ENCODE measurements at regions of chr3 and their contacts with region 1.

Region 1: DNA sequence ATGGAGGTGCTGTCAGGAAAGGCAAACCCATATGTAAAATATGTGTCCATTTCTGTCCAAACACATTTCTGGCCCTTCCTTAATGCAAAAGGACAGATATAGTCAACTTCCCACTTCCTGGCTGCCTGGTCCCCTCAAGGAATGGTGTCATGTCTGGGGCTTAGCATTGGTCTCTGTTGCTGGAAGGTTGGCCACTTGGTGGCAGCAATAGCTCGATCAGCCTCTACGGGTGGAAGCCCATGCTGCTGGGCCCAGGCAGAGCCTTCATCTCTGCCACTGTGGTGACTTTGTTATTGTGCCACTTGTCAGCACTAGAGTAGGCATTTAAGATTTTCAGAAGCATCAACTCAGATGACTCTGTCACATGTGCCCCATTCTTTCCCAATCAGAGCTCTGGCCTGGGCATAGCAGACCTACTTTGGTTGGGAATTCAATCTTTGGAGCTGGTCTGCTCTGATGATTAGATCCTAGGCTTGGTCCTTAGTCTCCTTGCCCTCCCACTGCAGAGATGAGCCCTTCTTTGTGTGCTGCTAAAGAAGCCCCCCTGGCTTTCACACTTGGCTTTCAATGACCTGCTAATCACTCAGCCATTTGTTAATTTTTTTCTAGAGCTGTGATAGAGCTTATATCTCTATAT is 51.0 kb upstream of the SPSB4 start:
- DNase-seq: peak; percentile 60
- H3K4me3 ChIP-seq: no peak overlapping the region; a peak in 1 of 4 replicates
- H3K27ac ChIP-seq: no peak overlapping the region
- H3K4me1 ChIP-seq: no peaks in the 10 kb centered on the region
- H3K27me3 ChIP-seq: no peaks in the 10 kb centered on the region
- CTCF ChIP-seq: peak; percentile 55
- EP300 ChIP-seq: no peak
- RAD21 ChIP-seq: peak; percentile 90

Region 2: GRCh38 chr3:140842984-140843649 is 157.0 kb before region 1 on chr3:
- CTCF ChIA-PET with region 1: no interaction called
- POLR2A ChIA-PET with region 1: no interaction called
- DNase-seq: no peak
- H3K4me3 ChIP-seq: no peak overlapping the region
- H3K27ac ChIP-seq: no peak overlapping the region
- H3K4me1 ChIP-seq: peaks cover 0 to 13% of the 10 kb centered on the region in 2 experiments; a peak in 1 of 4 replicates
- H3K27me3 ChIP-seq: no peaks in the 10 kb centered on the region
- CTCF ChIP-seq: no peak
- EP300 ChIP-seq: no peak
- RAD21 ChIP-seq: no peak

Region 3: GRCh38 chr3:141011232-141011996 is 11.3 kb after region 1 on chr3:
- CTCF ChIA-PET with region 1: interaction called, 63 read pairs
- POLR2A ChIA-PET with region 1: no interaction called
- DNase-seq: peak; percentile 79
- H3K4me3 ChIP-seq: no peak overlapping the region
- H3K27ac ChIP-seq: no peak overlapping the region
- H3K4me1 ChIP-seq: no peaks in the 10 kb centered on the region; a peak in 1 of 4 replicates
- H3K27me3 ChIP-seq: no peaks in the 10 kb centered on the region
- CTCF ChIP-seq: peak; percentile 76
- EP300 ChIP-seq: no peak
- RAD21 ChIP-seq: peak; percentile 85

Region 4: GRCh38 chr3:141067206-141067974 is 67.2 kb after region 1 on chr3:
- CTCF ChIA-PET with region 1: no interaction called
- POLR2A ChIA-PET with region 1: no interaction called
- DNase-seq: no peak
- H3K4me3 ChIP-seq: no peak overlapping the region
- H3K27ac ChIP-seq: no peak overlapping the region
- H3K4me1 ChIP-seq: peaks cover 0 to 29% of the 10 kb centered on the region in 2 experiments; a peak in 2 of 4 replicates
- H3K27me3 ChIP-seq: no peaks in the 10 kb centered on the region
- CTCF ChIP-seq: no peak
- EP300 ChIP-seq: no peak
- RAD21 ChIP-seq: no peak

Region 5: DNA sequence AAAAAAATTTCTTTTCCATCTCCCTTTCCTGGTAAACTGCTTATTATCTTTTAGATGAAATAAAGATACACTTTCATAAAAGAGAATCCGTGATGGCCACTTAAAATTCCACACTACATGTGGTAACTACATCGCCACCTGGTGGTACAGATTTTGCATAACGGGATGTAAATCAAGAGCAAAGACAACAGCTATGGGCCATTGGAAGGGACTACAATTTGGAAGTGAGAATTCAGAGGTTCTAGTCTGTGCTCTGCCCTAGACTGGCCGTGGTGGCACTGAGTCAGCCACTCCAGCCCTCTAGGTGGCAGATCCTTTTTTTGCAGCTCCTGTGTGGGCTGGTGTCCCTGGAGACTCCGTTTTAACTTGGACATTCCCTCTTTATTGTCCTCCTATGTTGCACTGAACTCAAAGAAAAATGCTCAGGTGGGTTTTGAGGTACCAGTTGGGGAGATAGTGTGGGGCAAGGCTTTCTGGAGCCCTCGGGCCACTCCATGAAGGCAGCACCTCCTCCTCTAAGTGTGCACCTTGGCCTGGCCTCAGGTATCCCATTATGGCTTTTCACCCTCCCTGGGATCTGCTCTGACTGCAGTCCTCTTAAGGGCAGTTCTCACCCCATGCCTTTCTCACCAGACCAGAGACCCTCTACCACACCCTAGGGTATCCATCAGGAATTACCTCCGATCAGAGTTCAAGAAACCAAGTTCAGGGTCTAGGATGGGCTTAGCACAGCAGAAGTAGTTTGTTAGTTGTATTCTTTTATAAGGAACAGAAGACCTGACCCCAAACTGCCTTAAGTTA is 105.9 kb after region 1 on chr3:
- CTCF ChIA-PET with region 1: interaction called, 23 read pairs
- POLR2A ChIA-PET with region 1: no interaction called
- DNase-seq: peak; percentile 76
- H3K4me3 ChIP-seq: no peak overlapping the region; a peak in 1 of 4 replicates
- H3K27ac ChIP-seq: no peak overlapping the region
- H3K4me1 ChIP-seq: peaks cover 0 to 21% of the 10 kb centered on the region in 2 experiments; a peak in 1 of 4 replicates
- H3K27me3 ChIP-seq: no peaks in the 10 kb centered on the region
- CTCF ChIP-seq: peak; percentile 81
- EP300 ChIP-seq: no peak
- RAD21 ChIP-seq: peak; percentile 87

Region 6: GRCh38 chr3:141129541-141130011 is 129.4 kb after region 1 on chr3:
- CTCF ChIA-PET with region 1: interaction called, 12 read pairs
- POLR2A ChIA-PET with region 1: no interaction called
- DNase-seq: no peak
- H3K4me3 ChIP-seq: no peak overlapping the region
- H3K27ac ChIP-seq: no peak overlapping the region
- H3K4me1 ChIP-seq: peaks cover 0 to 18% of the 10 kb centered on the region in 2 experiments; a peak in 1 of 4 replicates
- H3K27me3 ChIP-seq: no peaks in the 10 kb centered on the region
- CTCF ChIP-seq: no peak
- EP300 ChIP-seq: no peak
- RAD21 ChIP-seq: no peak

Region 7: DNA sequence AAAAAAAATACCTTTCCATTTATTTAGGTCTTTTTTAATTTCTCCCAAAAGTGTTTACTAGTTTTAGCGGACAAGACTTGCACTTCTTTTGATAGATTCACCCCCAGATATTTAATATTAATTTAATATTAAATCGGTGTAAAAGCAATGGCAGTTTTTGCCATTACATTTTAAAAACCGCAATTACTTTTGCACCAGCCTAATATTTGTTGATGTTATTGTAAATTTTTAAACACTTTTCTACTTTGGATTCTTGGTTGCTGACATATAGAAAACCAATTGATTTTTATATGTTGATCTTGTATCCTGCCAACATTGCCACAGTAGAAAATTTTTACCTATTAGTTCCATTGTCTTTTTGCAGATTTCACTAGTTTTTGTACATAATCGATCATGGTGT is 167.5 kb after region 1 on chr3:
- CTCF ChIA-PET with region 1: no interaction called
- POLR2A ChIA-PET with region 1: no interaction called
- DNase-seq: no peak
- H3K4me3 ChIP-seq: no peak overlapping the region
- H3K27ac ChIP-seq: no peak overlapping the region
- H3K4me1 ChIP-seq: no peaks in the 10 kb centered on the region
- H3K27me3 ChIP-seq: no peaks in the 10 kb centered on the region
- CTCF ChIP-seq: no peak
- EP300 ChIP-seq: no peak
- RAD21 ChIP-seq: no peak

Region 8: GRCh38 chr3:141184430-141184829 is 184.3 kb after region 1 on chr3:
- CTCF ChIA-PET with region 1: interaction called, 17 read pairs
- POLR2A ChIA-PET with region 1: no interaction called
- DNase-seq: no peak
- H3K4me3 ChIP-seq: no peak overlapping the region
- H3K27ac ChIP-seq: no peak overlapping the region
- H3K4me1 ChIP-seq: no peaks in the 10 kb centered on the region
- H3K27me3 ChIP-seq: no peaks in the 10 kb centered on the region
- CTCF ChIP-seq: no peak
- EP300 ChIP-seq: no peak
- RAD21 ChIP-seq: no peak

Region 9: DNA sequence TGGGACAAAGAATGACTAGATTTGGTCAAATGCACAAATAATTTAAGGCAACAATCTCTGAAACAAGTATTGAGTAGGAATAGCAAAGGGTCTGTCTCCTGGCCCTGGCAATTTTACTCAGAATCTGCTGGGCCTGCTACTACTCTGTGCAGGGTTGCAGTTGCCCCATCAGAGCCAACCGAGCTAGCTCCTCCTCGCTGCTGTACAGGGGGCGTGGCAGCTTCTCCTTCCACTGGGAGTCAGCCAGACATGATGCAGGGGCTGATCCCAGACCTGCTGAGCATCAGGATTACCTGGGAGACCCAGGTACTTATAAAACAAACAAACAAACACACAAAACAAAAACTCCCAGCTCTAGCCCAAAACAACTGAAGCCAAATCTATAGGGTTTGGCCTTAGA is 201.0 kb after region 1 on chr3:
- CTCF ChIA-PET with region 1: interaction called, 134 read pairs
- POLR2A ChIA-PET with region 1: no interaction called
- DNase-seq: no peak
- H3K4me3 ChIP-seq: no peak overlapping the region
- H3K27ac ChIP-seq: no peak overlapping the region
- H3K4me1 ChIP-seq: no peaks in the 10 kb centered on the region
- H3K27me3 ChIP-seq: no peaks in the 10 kb centered on the region; the same call in 1 of the 2 replicates
- CTCF ChIP-seq: no peak
- EP300 ChIP-seq: no peak
- RAD21 ChIP-seq: no peak